ENCODE measurements at regions of chr13 and their contacts with region 1.

Region 1: GRCh38 chr13:102452831-102453230 is 51.0 kb upstream of the FGF14 start:
- DNase-seq: no peak
- H3K4me3 Mint-ChIP-seq: no peak overlapping the region
- H3K27ac Mint-ChIP-seq: no peak overlapping the region
- H3K4me1 Mint-ChIP-seq: peaks cover 5% of the 10 kb centered on the region
- H3K27me3 Mint-ChIP-seq: peaks cover 9% of the 10 kb centered on the region

Region 2: DNA sequence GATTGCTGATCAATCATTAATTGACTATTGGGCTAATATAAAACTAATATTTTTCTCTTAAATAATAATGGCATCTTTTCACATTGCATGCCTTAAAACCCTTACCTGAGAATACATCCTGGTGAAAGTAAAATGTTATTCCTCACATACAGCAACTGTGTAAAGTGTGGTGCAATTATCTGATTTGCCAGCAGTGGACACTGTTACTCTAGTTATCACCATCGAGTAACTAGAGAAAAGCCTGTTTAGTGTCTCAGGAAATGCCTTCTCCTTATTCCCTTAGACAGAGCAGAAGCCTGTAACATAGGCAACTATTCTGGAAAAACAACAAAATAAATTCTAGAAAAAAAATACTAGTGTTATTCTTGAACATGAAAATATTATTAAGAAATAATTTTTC is 510.8 kb before region 1 on chr13:
- intact Hi-C with region 1: loop called (anchors 10 kb)
- DNase-seq: no peak
- H3K4me3 Mint-ChIP-seq: no peak overlapping the region
- H3K27ac Mint-ChIP-seq: no peak overlapping the region
- H3K4me1 Mint-ChIP-seq: no peaks in the 10 kb centered on the region
- H3K27me3 Mint-ChIP-seq: no peaks in the 10 kb centered on the region

Region 3: DNA sequence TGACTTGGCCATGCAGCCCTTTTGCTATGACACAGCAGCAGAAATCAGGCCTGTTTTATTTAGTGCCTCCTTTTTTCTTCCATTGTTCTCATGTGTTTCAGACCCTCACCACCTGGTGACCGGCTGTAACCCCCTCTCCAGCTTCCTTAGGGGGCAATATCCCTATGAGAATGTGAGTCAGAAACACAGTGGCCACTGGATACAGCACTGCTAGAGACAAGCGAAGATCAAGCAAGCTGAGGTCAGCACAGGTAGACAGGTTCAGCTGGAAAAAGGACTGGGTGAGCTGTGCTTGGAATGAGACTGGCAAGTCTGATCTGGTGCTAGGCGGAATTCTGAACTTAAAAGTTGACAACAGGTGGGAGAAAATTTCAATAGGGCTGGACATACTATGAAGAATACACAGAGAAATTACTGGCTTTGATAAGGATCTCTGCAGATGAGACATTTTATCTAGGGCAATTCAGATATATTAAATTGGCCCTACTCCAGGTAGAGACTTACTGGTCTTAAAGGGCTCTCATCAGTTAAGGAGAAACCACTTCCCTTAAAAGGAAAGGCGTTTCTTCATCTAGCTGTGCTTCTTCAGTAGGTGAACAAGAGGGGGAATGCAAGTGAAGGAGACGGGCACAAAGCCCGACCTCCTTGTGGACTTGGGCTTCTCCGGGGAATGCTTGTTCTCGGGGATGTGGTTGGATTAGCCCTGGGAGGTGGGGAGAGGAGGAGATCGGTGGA is 476.3 kb after region 1 on chr13:
- intact Hi-C with region 1: no loop called
- DNase-seq: no peak
- H3K4me3 Mint-ChIP-seq: no peak overlapping the region
- H3K27ac Mint-ChIP-seq: no peak overlapping the region
- H3K4me1 Mint-ChIP-seq: no peaks in the 10 kb centered on the region
- H3K27me3 Mint-ChIP-seq: peaks cover 3% of the 10 kb centered on the region

Measured in activated T-helper 1 cell treated with anti-CD3 and anti-CD28 coated beads, Interleukin-12 subunit alpha, Interleukin-12 subunit beta, Interleukin-2, Interleukin-4 antibody, amounts not matched to agents 30 ng/mL and 10 ng/mL and 1 ng/mL, durations not matched to agents 14 hours and 24 hours and 36 hours (primary cell).